HEK293 (cell line): ENCODE measurements at regions of chr17 and their contacts with region 1.

Region 1: GRCh38 chr17:58631523-58632323 is 60.1 kb downstream of the TEX14 start:
- H3K4me3 ChIP-seq: peak overlapping the region; percentile 19
- H3K27ac ChIP-seq: peak overlapping the region; percentile 86
- H3K4me1 ChIP-seq: no peaks in the 10 kb centered on the region
- CTCF ChIP-seq: peak; percentile 88

Region 2: GRCh38 chr17:58587702-58588254 is 43.9 kb before region 1 on chr17:
- CTCF ChIA-PET with region 1: interaction called, 13 read pairs
- POLR2A ChIA-PET with region 1: interaction called, 22 read pairs
- H3K4me3 ChIP-seq: no peak overlapping the region
- H3K27ac ChIP-seq: no peak overlapping the region
- H3K4me1 ChIP-seq: no peaks in the 10 kb centered on the region
- CTCF ChIP-seq: peak; percentile 90

Region 3: GRCh38 chr17:58611331-58611730 is 20.4 kb before region 1 on chr17:
- CTCF ChIA-PET with region 1: interaction called, 12 read pairs
- POLR2A ChIA-PET with region 1: interaction called, 5 read pairs
- H3K4me3 ChIP-seq: no peak overlapping the region
- H3K27ac ChIP-seq: no peak overlapping the region
- H3K4me1 ChIP-seq: no peaks in the 10 kb centered on the region
- CTCF ChIP-seq: no peak

Region 4: DNA sequence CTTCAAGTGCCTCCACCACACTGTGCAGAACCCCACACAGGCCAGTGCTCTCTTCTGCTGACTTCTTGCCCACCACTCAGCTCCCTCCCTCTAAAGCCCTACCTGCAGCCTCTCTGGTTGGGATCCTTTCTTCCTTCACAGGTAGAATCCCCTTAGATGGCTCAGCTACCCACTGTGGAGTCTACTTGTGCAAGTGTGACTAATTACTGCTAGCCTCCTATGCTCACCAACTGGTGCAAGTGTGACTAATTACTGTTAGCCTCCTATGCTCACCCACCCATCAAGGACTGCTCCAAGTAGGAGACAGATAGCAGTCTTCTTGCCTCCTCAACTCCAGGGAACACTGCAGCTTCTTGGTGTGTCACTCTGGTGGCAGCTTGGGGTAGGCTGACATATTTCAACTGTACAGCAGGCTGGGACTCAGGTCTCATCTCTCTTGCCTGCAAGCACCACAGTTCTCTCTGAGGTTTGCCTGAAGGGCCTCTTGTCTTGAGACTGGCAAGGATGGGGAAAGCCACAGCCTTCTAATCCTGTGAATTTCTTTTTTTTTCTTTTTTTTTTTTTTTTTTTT is 16.6 kb after region 1 on chr17:
- CTCF ChIA-PET with region 1: interaction called, 3 read pairs
- POLR2A ChIA-PET with region 1: interaction called, 55 read pairs
- H3K4me3 ChIP-seq: no peak overlapping the region
- H3K27ac ChIP-seq: no peak overlapping the region
- H3K4me1 ChIP-seq: no peaks in the 10 kb centered on the region
- CTCF ChIP-seq: no peak

Region 5: GRCh38 chr17:58669853-58670252 is 38.1 kb after region 1 on chr17:
- CTCF ChIA-PET with region 1: interaction called, 3 read pairs
- POLR2A ChIA-PET with region 1: interaction called, 13 read pairs
- H3K4me3 ChIP-seq: no peak overlapping the region
- H3K27ac ChIP-seq: no peak overlapping the region
- H3K4me1 ChIP-seq: no peaks in the 10 kb centered on the region
- CTCF ChIP-seq: no peak

Region 6: GRCh38 chr17:58692239-58693055 is 60.7 kb after region 1 on chr17 and contains the start of gene RAD51C:
- CTCF ChIA-PET with region 1: interaction called, 3 read pairs
- POLR2A ChIA-PET with region 1: interaction called, 49 read pairs
- H3K4me3 ChIP-seq: peak within 1 kb of the TSS; percentile 74
- H3K27ac ChIP-seq: peak within 1 kb of the TSS; percentile 96
- H3K4me1 ChIP-seq: peaks cover 16% of the 10 kb centered on the region
- CTCF ChIP-seq: no peak; the same call in 1 of the 2 replicates

Region 7: GRCh38 chr17:59155439-59156182 is 523.9 kb after region 1 on chr17 and contains the start of gene PRR11:
- CTCF ChIA-PET with region 1: no interaction called
- POLR2A ChIA-PET with region 1: interaction called, 10 read pairs
- H3K4me3 ChIP-seq: peak within 1 kb of the TSS; percentile 80
- H3K27ac ChIP-seq: peak within 1 kb of the TSS; percentile 98
- H3K4me1 ChIP-seq: peaks cover 23% of the 10 kb centered on the region
- CTCF ChIP-seq: no peak